Activated CD4-positive, alpha-beta memory T cell treated with anti-CD3 and anti-CD28 coated beads for 36 hours (primary cell): ENCODE measurements at regions of chr10 and their contacts with region 1.

Region 1: GRCh38 chr10:17430647-17431355 is 23.6 kb downstream of the ST8SIA6 start:
- DNase-seq: peak; percentile 70
- H3K4me3 Mint-ChIP-seq: no peak overlapping the region
- H3K27ac Mint-ChIP-seq: no peak overlapping the region
- H3K4me1 Mint-ChIP-seq: peaks cover 52% of the 10 kb centered on the region
- H3K27me3 Mint-ChIP-seq: no peaks in the 10 kb centered on the region

Region 2: DNA sequence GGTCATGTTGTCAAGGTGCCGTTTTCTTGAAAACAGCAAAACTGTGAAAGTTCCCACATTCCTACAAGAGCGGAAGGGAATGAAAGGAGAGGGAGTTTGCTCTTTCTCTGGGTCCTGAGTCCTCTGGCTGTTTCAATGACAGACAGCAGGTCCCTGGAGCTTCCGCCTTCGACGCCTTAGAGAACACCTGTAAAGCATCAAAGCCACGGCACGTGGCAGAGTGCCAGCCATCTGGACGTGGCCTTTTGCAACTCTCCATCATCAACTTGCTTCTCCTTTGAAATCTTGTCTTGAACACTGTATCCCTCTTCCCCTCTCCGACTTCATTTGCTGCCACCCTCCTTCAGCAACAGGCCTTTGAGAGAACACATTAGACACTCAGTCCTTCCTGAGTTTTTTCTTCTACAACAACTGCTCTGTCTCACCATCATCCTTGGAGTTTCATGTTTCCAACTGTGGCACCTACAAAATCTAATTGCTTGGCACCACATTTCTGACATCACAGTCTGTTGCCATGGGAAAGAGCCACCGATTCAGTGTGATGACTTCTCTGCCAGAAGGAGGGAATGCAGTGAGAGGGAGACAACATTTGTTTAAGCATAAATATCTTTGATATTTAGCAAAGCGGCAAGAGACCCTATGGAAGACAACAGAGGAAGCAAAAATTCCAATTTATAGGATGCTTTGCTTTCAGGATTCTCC is 1198.9 kb before region 1 on chr10:
- CTCF ChIA-PET with region 1: no interaction called
- POLR2A ChIA-PET with region 1: no interaction called
- intact Hi-C with region 1: no loop called
- DNase-seq: no peak
- H3K4me3 Mint-ChIP-seq: no peak overlapping the region
- H3K27ac Mint-ChIP-seq: no peak overlapping the region
- H3K4me1 Mint-ChIP-seq: no peaks in the 10 kb centered on the region
- H3K27me3 Mint-ChIP-seq: peaks cover 2% of the 10 kb centered on the region

Region 3: DNA sequence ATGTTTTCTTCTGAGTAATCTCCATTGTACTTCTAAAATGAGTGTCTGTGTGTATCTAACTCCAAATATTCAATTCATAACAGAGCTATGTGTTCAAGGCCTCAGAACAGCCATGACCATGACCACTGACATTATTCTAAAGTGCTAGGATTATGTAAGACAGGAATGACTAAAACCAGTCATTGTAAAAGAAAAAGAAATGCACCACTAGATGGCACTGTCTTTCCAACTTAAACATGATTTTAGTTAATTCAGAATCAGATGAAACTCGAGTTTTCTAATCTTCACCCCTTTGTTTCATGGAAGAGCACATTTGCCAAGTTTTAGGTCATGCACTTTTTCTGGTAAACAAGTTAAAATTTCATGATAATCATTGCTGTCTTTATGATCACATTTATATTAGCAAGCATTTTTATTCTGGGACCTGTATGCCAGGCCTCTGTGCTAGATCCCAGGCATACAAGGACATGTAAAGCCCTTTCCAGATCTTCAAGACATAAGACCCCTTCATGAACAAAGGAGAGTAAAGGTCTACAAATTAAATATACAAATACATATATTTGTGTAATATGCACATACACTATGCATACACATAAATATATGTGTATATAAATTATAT is 587.4 kb before region 1 on chr10:
- CTCF ChIA-PET with region 1: interaction called, 3 read pairs
- POLR2A ChIA-PET with region 1: no interaction called
- intact Hi-C with region 1: loop called (anchors 2 kb)
- DNase-seq: no peak
- H3K4me3 Mint-ChIP-seq: no peak overlapping the region
- H3K27ac Mint-ChIP-seq: no peak overlapping the region
- H3K4me1 Mint-ChIP-seq: peaks cover 4% of the 10 kb centered on the region
- H3K27me3 Mint-ChIP-seq: no peaks in the 10 kb centered on the region

Region 4: DNA sequence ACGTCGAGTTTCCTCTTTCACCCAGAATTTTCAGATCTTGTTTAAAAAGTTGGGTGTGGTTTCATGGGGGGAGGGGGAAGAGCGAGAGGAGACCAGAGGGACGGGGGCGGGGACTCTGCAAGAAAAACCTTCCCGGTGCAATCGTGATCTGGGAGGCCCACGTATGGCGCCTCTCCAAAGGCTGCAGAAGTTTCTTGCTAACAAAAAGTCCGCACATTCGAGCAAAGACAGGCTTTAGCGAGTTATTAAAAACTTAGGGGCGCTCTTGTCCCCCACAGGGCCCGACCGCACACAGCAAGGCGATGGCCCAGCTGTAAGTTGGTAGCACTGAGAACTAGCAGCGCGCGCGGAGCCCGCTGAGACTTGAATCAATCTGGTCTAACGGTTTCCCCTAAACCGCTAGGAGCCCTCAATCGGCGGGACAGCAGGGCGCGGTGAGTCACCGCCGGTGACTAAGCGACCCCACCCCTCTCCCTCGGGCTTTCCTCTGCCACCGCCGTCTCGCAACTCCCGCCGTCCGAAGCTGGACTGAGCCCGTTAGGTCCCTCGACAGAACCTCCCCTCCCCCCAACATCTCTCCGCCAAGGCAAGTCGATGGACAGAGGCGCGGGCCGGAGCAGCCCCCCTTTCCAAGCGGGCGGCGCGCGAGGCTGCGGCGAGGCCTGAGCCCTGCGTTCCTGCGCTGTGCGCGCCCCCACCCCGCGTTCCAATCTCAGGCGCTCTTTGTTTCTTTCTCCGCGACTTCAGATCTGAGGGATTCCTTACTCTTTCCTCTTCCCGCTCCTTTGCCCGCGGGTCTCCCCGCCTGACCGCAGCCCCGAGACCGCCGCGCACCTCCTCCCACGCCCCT is 202.5 kb before region 1 on chr10 and contains the start of gene VIM:
- CTCF ChIA-PET with region 1: no interaction called
- POLR2A ChIA-PET with region 1: no interaction called
- intact Hi-C with region 1: loop called (anchors 2 kb)
- DNase-seq: peak; percentile 93
- H3K4me3 Mint-ChIP-seq: peak within 1 kb of the TSS; percentile 95
- H3K27ac Mint-ChIP-seq: peak within 1 kb of the TSS; percentile 87
- H3K4me1 Mint-ChIP-seq: peaks cover 42% of the 10 kb centered on the region
- H3K27me3 Mint-ChIP-seq: peaks cover 1% of the 10 kb centered on the region
- total RNA-seq, gene VIM: 515 to 525 TPM

Region 5: DNA sequence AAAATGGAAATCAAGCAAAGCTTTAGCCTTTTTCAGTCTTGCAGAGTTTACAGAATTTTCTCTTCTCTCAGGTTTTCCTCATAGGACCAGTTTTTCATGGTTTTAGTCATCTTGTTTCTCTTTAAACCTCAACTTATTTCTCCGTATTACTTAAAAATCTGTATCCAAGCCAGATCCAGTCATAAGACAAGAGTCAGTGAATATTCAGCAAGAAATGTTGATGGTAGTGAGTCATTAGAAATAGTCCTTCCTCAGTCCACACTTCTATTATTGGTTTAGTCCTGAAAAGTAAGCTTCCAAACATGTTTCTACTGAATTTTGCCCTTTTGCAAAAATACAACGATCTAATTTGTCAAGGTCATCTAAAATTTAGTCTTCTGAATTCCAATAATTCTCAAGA is 95.7 kb before region 1 on chr10:
- CTCF ChIA-PET with region 1: no interaction called
- POLR2A ChIA-PET with region 1: no interaction called
- intact Hi-C with region 1: no loop called
- DNase-seq: no peak
- H3K4me3 Mint-ChIP-seq: no peak overlapping the region
- H3K27ac Mint-ChIP-seq: no peak overlapping the region
- H3K4me1 Mint-ChIP-seq: no peaks in the 10 kb centered on the region
- H3K27me3 Mint-ChIP-seq: no peaks in the 10 kb centered on the region

Region 6: DNA sequence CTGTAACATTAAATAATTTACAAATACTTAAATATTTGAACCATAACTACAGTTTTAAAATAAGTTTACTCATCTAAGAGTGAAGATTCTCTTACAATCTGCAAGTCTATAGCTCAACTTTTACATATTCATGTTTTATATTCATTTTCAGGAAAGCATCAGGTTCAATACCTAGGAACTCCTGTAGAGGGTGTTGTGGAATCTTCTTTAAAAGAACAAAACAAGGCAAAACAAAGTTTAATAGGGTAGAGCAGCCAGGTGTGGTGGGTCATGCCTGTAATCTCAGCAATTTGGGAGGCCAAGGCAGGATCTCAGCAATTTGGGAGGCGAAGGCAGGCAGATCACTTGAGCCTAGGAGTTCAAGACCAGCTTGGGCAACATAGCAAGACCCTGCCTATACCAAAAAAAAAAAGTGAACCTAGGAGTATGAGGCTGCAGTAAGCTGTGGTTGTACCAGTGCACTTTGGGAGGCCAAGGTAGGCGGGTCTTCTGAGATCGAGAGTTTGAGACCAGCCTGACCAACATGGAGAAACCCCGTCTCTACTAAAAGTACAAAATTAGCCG is 21.5 kb before region 1 on chr10:
- CTCF ChIA-PET with region 1: interaction called, 12 read pairs
- POLR2A ChIA-PET with region 1: no interaction called
- intact Hi-C with region 1: loop called (anchors 1 kb)
- DNase-seq: no peak
- H3K4me3 Mint-ChIP-seq: no peak overlapping the region
- H3K27ac Mint-ChIP-seq: no peak overlapping the region
- H3K4me1 Mint-ChIP-seq: peaks cover 14% of the 10 kb centered on the region
- H3K27me3 Mint-ChIP-seq: no peaks in the 10 kb centered on the region

Region 7: DNA sequence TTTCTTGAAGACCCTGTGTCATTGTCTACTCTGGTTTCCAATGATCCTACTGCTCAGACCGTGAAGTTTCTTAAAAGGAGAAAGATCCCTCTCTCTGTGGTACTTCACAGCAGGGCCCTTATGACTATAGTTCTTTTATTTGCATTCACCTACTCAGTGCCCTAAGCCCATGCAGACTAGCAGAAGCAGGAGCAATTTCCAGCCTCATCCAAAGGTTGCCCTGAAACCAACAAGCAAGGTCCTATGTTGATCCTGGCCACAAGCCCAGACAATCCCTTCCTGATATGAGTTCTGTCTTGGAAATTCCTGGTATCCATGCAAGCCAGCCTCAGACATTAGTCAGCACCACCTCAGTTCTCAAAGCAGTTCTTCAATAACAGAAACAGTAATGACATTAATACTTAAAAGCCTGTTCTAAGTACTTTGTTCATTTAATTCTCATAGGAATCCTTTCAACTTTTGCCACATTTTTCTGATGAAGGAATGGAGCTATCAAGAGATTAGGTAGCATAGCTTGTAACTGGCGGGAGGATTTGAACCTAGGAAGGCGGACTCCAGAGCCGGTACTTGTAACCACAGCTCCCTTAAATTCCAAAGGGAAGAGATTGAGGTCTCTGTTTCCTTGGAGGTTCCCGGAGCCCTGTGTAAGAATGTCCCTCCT is 81.7 kb after region 1 on chr10:
- CTCF ChIA-PET with region 1: no interaction called
- POLR2A ChIA-PET with region 1: no interaction called
- intact Hi-C with region 1: loop called (anchors 5 kb)
- DNase-seq: no peak
- H3K4me3 Mint-ChIP-seq: no peak overlapping the region
- H3K27ac Mint-ChIP-seq: peak overlapping the region; percentile 64
- H3K4me1 Mint-ChIP-seq: peaks cover 35% of the 10 kb centered on the region
- H3K27me3 Mint-ChIP-seq: no peaks in the 10 kb centered on the region

Region 8: DNA sequence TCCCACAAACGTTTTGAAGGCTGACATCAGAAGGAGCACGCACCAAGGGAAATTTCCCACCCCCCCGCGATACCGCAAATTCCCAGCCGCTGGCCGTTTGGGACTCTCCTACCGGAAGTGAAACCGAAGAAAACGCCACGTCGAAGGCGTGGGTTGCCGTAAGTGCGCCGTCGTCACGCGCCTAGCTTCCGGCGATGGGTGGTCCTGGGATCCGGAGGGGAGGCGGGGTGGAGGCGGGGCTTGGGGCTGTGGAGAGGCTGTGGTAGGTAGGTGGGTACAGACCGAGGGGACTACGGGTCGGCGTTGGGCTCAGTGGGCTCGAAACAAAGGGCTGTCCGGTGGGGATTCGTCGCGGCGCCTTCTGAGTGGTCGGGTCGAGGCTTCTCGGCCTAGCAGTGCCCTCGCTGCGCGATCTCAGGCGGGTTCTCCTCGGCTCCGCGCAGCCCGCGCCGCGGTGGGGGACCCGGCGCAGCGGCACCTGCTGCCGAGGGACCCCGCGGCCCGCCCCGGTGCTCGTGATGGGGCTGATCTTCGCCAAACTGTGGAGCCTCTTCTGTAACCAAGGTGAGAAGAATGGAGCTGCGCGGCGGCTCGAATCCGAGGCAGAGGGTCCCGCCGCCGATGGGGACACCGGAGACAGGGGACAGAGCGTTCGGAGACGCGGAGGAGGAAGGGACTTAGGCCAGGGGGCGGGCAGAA is 1228.5 kb after region 1 on chr10 and contains the start of gene ARL5B:
- CTCF ChIA-PET with region 1: no interaction called
- POLR2A ChIA-PET with region 1: no interaction called
- intact Hi-C with region 1: loop called (anchors 10 kb)
- DNase-seq: peak; percentile 98
- H3K4me3 Mint-ChIP-seq: peak within 1 kb of the TSS; percentile 95
- H3K27ac Mint-ChIP-seq: peak within 1 kb of the TSS; percentile 92
- H3K4me1 Mint-ChIP-seq: peaks cover 34% of the 10 kb centered on the region
- H3K27me3 Mint-ChIP-seq: no peaks in the 10 kb centered on the region
- total RNA-seq, gene ARL5B: 16.2 to 16.3 TPM